Activated CD4-positive, alpha-beta T cell treated with anti-CD3 and anti-CD28 coated beads for 36 hours (primary cell): ENCODE measurements at regions of chr2 and their contacts with region 1.

Region 1: DNA sequence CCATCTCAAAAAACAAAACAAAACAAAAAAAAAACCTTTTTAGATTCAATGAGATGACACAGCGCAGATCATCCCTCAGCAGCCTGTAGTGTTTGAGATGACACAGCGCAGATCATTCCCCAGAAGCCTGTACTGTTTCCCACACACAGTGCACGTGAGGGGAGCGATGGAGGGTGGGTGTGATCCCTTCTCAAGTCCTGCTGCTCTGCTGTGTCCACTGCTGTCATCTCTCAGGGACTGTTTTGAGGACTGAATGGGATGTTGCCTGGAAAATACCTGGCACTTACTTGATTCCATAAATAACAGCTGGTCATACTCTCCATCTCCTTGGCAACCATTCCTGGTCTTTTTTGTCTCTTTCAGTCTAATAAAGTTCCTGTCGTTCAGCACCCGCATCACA is 25.7 kb downstream of the TGOLN2 start:
- DNase-seq: no peak
- ATAC-seq: no peak
- H3K4me3 Mint-ChIP-seq: no peak overlapping the region
- H3K27ac Mint-ChIP-seq: no peak overlapping the region
- H3K4me1 Mint-ChIP-seq: peaks cover 11% of the 10 kb centered on the region
- H3K27me3 Mint-ChIP-seq: no peaks in the 10 kb centered on the region

Region 2: DNA sequence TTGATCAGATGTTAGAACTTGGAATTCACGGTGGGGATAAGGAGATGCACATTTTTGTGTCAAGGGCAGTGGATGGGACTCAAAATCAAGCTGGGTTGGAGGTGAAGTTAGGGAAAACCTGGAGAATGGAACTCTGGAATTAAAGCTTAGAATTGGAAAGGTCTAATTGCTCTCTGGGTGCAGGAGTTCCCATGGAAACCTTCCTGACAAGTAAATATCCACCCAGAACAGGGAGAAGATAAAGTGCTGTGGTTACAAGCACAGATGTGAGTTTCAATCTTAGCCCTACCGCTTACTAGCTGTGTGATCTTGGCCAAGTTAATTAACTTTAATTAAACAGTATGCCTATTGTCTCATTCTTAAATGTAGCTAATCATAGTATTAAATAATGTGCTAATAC is 240.2 kb before region 1 on chr2:
- CTCF ChIA-PET with region 1: interaction called, 12 read pairs
- POLR2A ChIA-PET with region 1: no interaction called
- intact Hi-C with region 1: loop called (anchors 1 kb)
- DNase-seq: no peak
- ATAC-seq: no peak
- H3K4me3 Mint-ChIP-seq: no peak overlapping the region
- H3K27ac Mint-ChIP-seq: no peak overlapping the region
- H3K4me1 Mint-ChIP-seq: peaks cover 10% of the 10 kb centered on the region
- H3K27me3 Mint-ChIP-seq: peaks cover 6% of the 10 kb centered on the region

Region 3: GRCh38 chr2:85132834-85133637 is 169.1 kb before region 1 on chr2 and contains the start of gene TCF7L1:
- CTCF ChIA-PET with region 1: interaction called, 6 read pairs
- POLR2A ChIA-PET with region 1: no interaction called
- intact Hi-C with region 1: loop called in 1 of 2 experiments (anchors 2 kb)
- DNase-seq: peak; percentile 67
- ATAC-seq: peak; percentile 77
- H3K4me3 Mint-ChIP-seq: peak within 1 kb of the TSS; percentile 53
- H3K27ac Mint-ChIP-seq: no peak within 1 kb of the TSS
- H3K4me1 Mint-ChIP-seq: peaks cover 9% of the 10 kb centered on the region
- H3K27me3 Mint-ChIP-seq: peaks cover 49% of the 10 kb centered on the region
- total RNA-seq, gene TCF7L1: 0.07 TPM in 1 of 2 experiments, not detected in the other

Region 4: DNA sequence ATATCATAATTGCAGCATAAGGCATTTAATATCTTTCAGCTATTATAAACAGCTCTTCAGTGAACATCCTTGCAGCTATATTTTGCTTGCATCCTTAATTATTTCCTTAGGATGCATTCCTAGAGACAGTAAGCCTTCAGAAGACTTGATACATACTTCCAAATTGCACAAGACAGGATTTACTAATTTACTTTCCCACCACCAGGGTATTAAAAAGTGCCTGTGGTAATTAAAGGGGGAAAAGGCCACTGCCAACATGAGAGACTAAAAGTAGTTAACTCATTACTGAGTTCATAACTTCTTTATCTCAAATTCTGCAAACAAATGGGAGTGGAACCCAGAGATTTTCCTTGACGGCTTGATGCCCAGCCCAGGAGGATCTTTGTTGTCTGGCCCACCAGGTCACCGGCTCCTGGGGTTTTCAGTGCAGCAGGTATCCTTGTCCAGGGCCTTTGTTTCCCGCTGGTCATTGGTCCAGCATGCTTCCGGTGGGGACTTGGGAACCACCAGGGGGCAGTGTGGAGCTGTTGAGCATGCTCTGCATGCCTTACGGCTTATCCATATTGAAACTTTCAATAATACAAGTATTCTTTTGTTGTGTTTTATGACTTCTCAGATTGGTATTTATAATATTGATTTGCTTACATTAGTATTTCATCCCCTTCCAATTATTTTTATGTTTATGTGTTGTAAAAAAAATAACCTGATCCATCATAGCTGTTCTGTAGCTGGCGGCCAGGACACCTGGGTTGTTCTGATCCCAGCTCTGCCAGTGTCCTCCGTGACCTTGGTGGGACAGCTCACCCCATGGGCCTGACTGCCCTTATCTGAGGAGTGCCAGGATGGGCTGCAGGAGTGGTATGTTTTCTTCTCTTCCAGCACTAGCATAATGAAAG is 35.7 kb before region 1 on chr2:
- CTCF ChIA-PET with region 1: interaction called, 94 read pairs
- POLR2A ChIA-PET with region 1: no interaction called
- intact Hi-C with region 1: loop called (anchors 1 kb)
- DNase-seq: peak; percentile 88
- ATAC-seq: peak; percentile 89
- H3K4me3 Mint-ChIP-seq: no peak overlapping the region
- H3K27ac Mint-ChIP-seq: no peak overlapping the region
- H3K4me1 Mint-ChIP-seq: no peaks in the 10 kb centered on the region
- H3K27me3 Mint-ChIP-seq: no peaks in the 10 kb centered on the region

Region 5: GRCh38 chr2:85318222-85319074 is 16.3 kb after region 1 on chr2:
- CTCF ChIA-PET with region 1: interaction called, 34 read pairs
- POLR2A ChIA-PET with region 1: interaction called, 3 read pairs
- intact Hi-C with region 1: no loop called
- DNase-seq: peak; percentile 70
- ATAC-seq: peak; percentile 88
- H3K4me3 Mint-ChIP-seq: peak overlapping the region; percentile 4
- H3K27ac Mint-ChIP-seq: peak overlapping the region; percentile 80
- H3K4me1 Mint-ChIP-seq: peaks cover 58% of the 10 kb centered on the region
- H3K27me3 Mint-ChIP-seq: no peaks in the 10 kb centered on the region